B cell (primary cell): ENCODE measurements at regions of chr1 and their contacts with region 1.

Region 1: DNA sequence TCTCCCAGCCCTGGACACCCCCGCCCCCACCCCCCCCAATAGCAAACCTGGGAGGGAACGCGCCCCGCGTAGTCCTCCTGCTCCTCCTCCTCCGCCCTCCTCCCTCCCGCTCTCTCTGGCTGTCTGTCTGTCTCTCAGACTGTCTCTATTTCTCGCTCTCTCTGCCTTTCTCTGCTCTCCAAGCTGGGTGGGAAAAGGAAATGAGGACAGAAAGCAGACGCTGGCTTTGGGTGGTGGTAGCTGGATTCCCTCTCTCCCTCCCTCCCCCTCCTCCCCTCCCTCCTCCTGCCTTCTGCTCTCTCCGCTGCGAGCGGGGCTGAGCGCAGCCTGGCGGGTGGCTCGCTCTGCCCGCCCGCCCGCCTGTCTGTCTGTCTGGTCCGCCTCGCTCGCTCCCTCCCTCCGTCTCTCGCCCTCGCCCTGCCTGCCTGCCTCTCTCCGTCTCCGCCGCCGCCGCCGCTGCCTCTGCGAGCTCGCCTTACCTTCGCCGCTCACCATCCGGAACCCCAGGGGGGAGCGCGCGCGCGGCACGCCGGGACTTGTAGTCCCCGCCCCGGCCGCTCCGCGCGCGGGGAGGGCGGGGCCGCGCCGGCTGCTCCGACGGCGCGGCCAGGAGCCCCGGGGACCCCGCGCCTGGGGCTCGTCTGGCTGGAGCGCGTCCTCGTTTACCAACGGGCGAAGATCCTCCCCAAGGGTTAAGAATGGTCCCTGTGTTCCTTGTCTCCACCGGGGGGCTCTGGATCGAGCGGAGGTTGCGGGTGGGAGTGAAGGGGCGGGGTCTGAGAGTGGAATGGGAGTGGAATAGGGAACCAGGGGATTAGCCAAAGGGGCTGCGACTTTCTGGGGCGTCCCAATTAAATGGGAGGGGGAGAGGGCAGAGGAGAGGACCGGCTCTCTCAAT is at the start of gene AHDC1:
- DNase-seq: peak; percentile 93
- ATAC-seq: peak; percentile 78
- H3K4me3 ChIP-seq: peak within 1 kb of the TSS; percentile 63 to 90 (median 79)
- H3K4me3 Mint-ChIP-seq: peak within 1 kb of the TSS; percentile 94
- H3K27ac ChIP-seq: peak within 1 kb of the TSS; percentile 32 to 74
- H3K27ac Mint-ChIP-seq: peak within 1 kb of the TSS; percentile 90
- H3K4me1 ChIP-seq: peaks cover 43 to 66% of the 10 kb centered on the region in 2 donors
- H3K4me1 Mint-ChIP-seq: peaks cover 50% of the 10 kb centered on the region
- H3K27me3 ChIP-seq: no peaks in the 10 kb centered on the region
- H3K27me3 Mint-ChIP-seq: no peaks in the 10 kb centered on the region
- CTCF ChIP-seq: no peak
- total RNA-seq, gene AHDC1: 29.9 and 32.0 TPM in 2 replicates

Region 2: GRCh38 chr1:26602378-26602959 is 1001.5 kb before region 1 on chr1:
- CTCF ChIA-PET with region 1: no interaction called
- POLR2A ChIA-PET with region 1: no interaction called
- intact Hi-C with region 1: no loop called
- DNase-seq: peak; percentile 78
- ATAC-seq: peak; percentile 62
- H3K4me3 ChIP-seq: no peak overlapping the region
- H3K4me3 Mint-ChIP-seq: no peak overlapping the region
- H3K27ac ChIP-seq: no peak overlapping the region
- H3K27ac Mint-ChIP-seq: no peak overlapping the region
- H3K4me1 ChIP-seq: peaks cover 0 to 5% of the 10 kb centered on the region in 2 donors
- H3K4me1 Mint-ChIP-seq: peaks cover 6% of the 10 kb centered on the region
- H3K27me3 ChIP-seq: no peaks in the 10 kb centered on the region
- H3K27me3 Mint-ChIP-seq: no peaks in the 10 kb centered on the region
- CTCF ChIP-seq: peak; percentile 92

Region 3: DNA sequence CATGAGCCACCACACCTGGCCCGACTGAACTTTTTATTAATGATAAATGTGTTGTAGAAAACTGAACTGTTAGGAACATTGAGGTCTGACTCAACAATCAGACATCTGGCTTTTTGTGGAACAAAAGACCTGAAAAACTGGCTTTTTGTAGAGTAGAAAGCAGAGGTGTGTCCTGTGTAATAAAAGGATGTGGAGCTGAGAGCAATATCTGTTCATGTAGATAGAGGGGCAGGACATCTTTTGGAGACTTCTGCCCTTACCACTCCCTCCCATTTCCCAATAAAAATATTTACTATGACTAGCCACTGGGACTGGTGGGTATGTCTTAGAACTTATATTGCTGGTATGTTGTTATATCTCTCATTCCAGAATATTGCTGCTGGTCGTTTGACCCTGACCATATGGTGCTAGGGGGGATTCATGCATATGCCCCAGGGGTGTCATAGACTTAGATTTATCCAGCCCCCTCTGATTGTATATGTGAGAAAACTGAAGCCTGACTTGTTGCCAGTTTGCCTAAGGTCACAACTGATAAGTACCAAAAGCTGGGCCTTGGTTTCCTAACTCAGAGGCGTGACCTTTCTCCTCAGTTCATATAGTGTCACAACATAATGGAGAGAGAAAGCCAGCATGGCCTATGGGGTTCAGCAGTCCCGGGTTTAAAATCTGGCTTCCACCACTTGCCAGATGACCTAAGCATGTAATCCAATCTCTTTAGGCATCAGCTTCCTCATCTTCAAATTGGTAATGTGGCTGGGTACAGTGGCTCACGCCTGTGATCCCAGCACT is 849.6 kb before region 1 on chr1:
- CTCF ChIA-PET with region 1: no interaction called
- POLR2A ChIA-PET with region 1: no interaction called
- intact Hi-C with region 1: no loop called
- DNase-seq: no peak
- ATAC-seq: no peak
- H3K4me3 ChIP-seq: no peak overlapping the region
- H3K4me3 Mint-ChIP-seq: no peak overlapping the region
- H3K27ac ChIP-seq: peak overlapping the region in 1 of 2 donors; percentile 32
- H3K27ac Mint-ChIP-seq: peak overlapping the region; percentile 10
- H3K4me1 ChIP-seq: peaks cover 6 to 12% of the 10 kb centered on the region in 2 donors
- H3K4me1 Mint-ChIP-seq: peaks cover 42% of the 10 kb centered on the region
- H3K27me3 ChIP-seq: no peaks in the 10 kb centered on the region
- H3K27me3 Mint-ChIP-seq: no peaks in the 10 kb centered on the region
- CTCF ChIP-seq: no peak

Region 4: GRCh38 chr1:27332536-27333281 is 271.2 kb before region 1 on chr1:
- CTCF ChIA-PET with region 1: interaction called, 20 read pairs
- POLR2A ChIA-PET with region 1: no interaction called
- intact Hi-C with region 1: no loop called
- DNase-seq: peak; percentile 73
- ATAC-seq: peak; percentile 90
- H3K4me3 ChIP-seq: no peak overlapping the region
- H3K4me3 Mint-ChIP-seq: no peak overlapping the region
- H3K27ac ChIP-seq: no peak overlapping the region
- H3K27ac Mint-ChIP-seq: peak overlapping the region; percentile 15
- H3K4me1 ChIP-seq: peaks cover 11 to 24% of the 10 kb centered on the region in 2 donors
- H3K4me1 Mint-ChIP-seq: peaks cover 38% of the 10 kb centered on the region
- H3K27me3 ChIP-seq: no peaks in the 10 kb centered on the region
- H3K27me3 Mint-ChIP-seq: no peaks in the 10 kb centered on the region
- CTCF ChIP-seq: peak; percentile 87

Region 5: DNA sequence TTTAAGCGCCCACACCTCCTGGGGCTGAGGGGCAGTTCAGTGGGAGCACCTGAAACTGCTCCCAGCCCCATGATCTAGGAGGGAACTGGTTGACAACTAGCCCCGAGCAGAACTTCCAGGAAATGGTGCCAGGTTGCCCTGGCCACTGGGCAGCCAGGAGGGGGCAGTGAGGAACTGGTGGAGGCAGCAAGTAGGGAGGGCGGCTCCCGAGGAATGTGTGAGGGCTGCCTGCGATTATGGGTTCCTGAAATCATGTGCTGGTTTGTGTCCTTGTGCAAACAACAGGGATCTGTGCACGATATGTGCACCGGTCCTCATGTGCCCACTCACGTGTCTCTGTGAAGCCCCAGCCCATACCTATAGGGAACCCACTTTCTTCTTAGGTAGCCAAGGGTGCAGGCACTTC is 201.6 kb before region 1 on chr1:
- CTCF ChIA-PET with region 1: interaction called, 135 read pairs
- POLR2A ChIA-PET with region 1: interaction called, 3 read pairs
- intact Hi-C with region 1: loop called (anchors 1 kb)
- DNase-seq: peak; percentile 54
- ATAC-seq: no peak
- H3K4me3 ChIP-seq: no peak overlapping the region
- H3K4me3 Mint-ChIP-seq: peak overlapping the region; percentile 72
- H3K27ac ChIP-seq: peak overlapping the region; percentile 49 to 79
- H3K27ac Mint-ChIP-seq: peak overlapping the region; percentile 89
- H3K4me1 ChIP-seq: peaks cover 41 to 59% of the 10 kb centered on the region in 2 donors
- H3K4me1 Mint-ChIP-seq: peaks cover 58% of the 10 kb centered on the region
- H3K27me3 ChIP-seq: no peaks in the 10 kb centered on the region
- H3K27me3 Mint-ChIP-seq: no peaks in the 10 kb centered on the region
- CTCF ChIP-seq: no peak

Region 6: GRCh38 chr1:27556781-27557595 is 46.9 kb before region 1 on chr1:
- CTCF ChIA-PET with region 1: interaction called, 118 read pairs
- POLR2A ChIA-PET with region 1: interaction called, 9 read pairs
- intact Hi-C with region 1: loop called (anchors 1 kb)
- DNase-seq: peak; percentile 81
- ATAC-seq: peak; percentile 89
- H3K4me3 ChIP-seq: no peak overlapping the region
- H3K4me3 Mint-ChIP-seq: peak overlapping the region; percentile 39
- H3K27ac ChIP-seq: peak overlapping the region in 1 of 2 donors; percentile 22
- H3K27ac Mint-ChIP-seq: peak overlapping the region; percentile 83
- H3K4me1 ChIP-seq: peaks cover 23 to 33% of the 10 kb centered on the region in 2 donors
- H3K4me1 Mint-ChIP-seq: peaks cover 44% of the 10 kb centered on the region
- H3K27me3 ChIP-seq: no peaks in the 10 kb centered on the region
- H3K27me3 Mint-ChIP-seq: no peaks in the 10 kb centered on the region
- CTCF ChIP-seq: peak; percentile 90

Region 7: DNA sequence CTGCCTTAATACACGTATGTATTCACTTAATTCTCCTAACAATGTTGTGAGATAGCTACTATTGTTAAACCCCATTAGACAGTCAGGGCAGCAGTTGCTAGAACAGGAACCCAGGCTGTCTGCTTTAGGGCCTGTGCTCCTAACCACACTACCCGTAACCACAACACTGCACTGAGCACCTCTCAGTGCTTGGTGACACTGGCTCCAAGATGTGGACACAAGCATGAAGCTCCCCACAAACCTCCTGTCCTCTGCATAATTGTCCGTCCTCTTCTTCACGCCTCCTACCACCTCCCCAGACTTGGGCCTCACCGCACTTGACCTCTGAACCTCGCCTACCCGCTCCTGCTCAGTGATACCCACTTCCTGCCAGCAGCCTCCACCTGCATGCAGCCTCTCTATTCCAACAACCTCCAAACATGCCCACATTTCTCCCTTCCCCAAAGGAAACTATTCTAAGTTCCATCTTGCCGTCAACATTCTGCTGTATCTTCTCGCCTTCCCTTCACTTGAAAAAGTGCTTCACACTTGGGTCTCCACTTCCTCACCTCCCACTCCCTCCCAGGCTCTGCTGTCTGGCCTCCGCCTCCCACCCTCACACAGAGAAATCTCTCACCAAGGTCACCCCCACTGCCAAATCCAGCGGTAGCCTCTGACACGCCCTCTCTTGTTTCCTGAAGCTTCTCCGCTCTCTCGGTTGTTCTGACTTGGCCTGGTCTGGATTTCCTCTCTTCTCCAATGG is 14.6 kb after region 1 on chr1:
- CTCF ChIA-PET with region 1: interaction called, 15 read pairs
- POLR2A ChIA-PET with region 1: interaction called, 4 read pairs
- intact Hi-C with region 1: no loop called
- DNase-seq: no peak
- ATAC-seq: peak; percentile 82
- H3K4me3 ChIP-seq: no peak overlapping the region
- H3K4me3 Mint-ChIP-seq: peak overlapping the region; percentile 23
- H3K27ac ChIP-seq: peak overlapping the region; percentile 39 to 55
- H3K27ac Mint-ChIP-seq: peak overlapping the region; percentile 83
- H3K4me1 ChIP-seq: peaks cover 32 to 61% of the 10 kb centered on the region in 2 donors
- H3K4me1 Mint-ChIP-seq: peaks cover 43% of the 10 kb centered on the region
- H3K27me3 ChIP-seq: no peaks in the 10 kb centered on the region
- H3K27me3 Mint-ChIP-seq: no peaks in the 10 kb centered on the region
- CTCF ChIP-seq: no peak

Region 8: DNA sequence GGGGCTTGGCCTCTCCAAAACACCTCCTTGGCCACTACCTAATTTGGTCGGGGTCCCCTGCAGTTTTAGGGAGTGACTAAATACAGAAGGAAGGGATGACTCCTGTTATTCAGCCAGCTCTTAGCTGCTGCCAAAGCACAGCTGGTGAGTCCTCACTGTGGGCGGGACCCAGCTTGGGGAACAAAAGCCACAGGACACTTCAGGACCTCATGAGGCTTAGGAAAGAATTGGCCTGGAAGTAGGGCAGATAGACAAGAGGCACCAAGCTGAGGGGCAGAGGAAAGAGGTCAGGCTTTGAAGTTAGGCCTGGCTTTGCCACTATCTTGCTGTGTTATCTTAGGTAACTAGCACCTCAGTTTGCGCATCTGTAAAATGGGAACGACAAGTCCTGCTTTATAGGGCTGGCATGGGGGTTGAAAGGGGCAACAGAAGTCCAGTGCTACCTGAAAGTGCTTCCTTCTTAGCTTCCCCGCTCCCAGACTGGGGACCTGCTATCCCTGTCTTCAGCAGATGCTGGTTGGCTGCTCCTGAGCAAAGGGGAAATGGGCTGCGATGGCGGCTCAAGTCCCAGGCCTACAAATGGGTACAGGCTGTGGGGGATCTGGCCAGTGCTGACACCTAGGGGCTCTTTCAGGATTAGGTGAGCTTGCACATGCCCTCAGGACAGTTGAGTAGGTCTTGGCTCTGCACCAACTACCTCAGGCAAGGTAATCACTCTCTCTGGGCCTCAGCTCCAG is 52.4 kb after region 1 on chr1:
- CTCF ChIA-PET with region 1: interaction called, 473 read pairs
- POLR2A ChIA-PET with region 1: interaction called, 12 read pairs
- intact Hi-C with region 1: no loop called
- DNase-seq: peak; percentile 34
- ATAC-seq: no peak
- H3K4me3 ChIP-seq: no peak overlapping the region
- H3K4me3 Mint-ChIP-seq: peak overlapping the region; percentile 8
- H3K27ac ChIP-seq: no peak overlapping the region
- H3K27ac Mint-ChIP-seq: peak overlapping the region; percentile 58
- H3K4me1 ChIP-seq: peaks cover 26 to 47% of the 10 kb centered on the region in 2 donors
- H3K4me1 Mint-ChIP-seq: peaks cover 42% of the 10 kb centered on the region
- H3K27me3 ChIP-seq: no peaks in the 10 kb centered on the region
- H3K27me3 Mint-ChIP-seq: no peaks in the 10 kb centered on the region
- CTCF ChIP-seq: no peak

Region 9: DNA sequence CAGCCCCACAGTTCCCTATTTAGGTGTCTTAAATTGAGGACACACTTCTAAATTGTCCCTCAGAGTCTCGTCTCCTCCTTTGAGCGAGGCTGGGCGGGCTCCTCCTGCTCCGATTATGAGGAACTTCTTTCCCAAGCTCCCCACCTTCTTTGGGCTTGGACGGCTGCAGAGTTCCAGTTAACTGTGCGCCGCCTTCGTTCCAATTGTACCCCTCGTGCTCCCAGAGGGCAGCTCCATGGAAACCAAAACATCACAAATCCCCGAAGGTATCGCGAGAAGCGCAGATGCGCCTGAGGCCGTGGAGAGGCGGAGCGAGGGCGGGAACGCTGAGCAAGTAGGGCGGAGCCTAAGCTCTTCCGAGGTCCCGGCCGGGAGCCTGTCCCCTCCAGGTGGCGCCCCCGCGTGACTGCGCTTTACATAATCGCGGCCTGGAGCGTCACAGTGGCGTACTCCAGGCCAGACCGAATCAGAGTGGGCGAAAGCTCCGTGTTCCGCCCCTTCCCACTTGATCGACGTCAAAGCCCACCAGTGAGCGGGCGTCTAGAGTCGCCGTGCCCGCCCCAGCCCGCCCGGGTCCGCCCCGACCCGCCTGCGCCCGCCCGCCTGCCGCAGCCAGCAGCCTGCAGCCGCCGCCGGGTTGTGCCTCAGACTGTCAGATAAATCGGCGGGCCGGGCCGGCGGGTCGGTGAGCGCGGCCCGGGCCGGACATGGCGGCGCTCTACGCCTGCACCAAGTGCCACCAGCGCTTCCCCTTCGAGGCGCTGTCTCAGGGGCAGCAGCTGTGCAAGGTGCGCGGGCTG is 121.6 kb after region 1 on chr1 and contains the start of gene FAM76A:
- CTCF ChIA-PET with region 1: no interaction called
- POLR2A ChIA-PET with region 1: no interaction called
- intact Hi-C with region 1: loop called (anchors 10 kb)
- DNase-seq: peak; percentile 100
- ATAC-seq: peak; percentile 91
- H3K4me3 ChIP-seq: peak within 1 kb of the TSS; percentile 68 to 94 (median 74)
- H3K4me3 Mint-ChIP-seq: peak within 1 kb of the TSS; percentile 94
- H3K27ac ChIP-seq: peak within 1 kb of the TSS; percentile 96 to 98
- H3K27ac Mint-ChIP-seq: peak within 1 kb of the TSS; percentile 98
- H3K4me1 ChIP-seq: peaks cover 17% of the 10 kb centered on the region in 2 donors
- H3K4me1 Mint-ChIP-seq: peaks cover 25% of the 10 kb centered on the region
- H3K27me3 ChIP-seq: no peaks in the 10 kb centered on the region
- H3K27me3 Mint-ChIP-seq: no peaks in the 10 kb centered on the region
- CTCF ChIP-seq: peak; percentile 27
- total RNA-seq, gene FAM76A: 25.0 and 28.5 TPM in 2 replicates